H1 (cell line): ENCODE measurements at regions of chr5 and their contacts with region 1.

Region 1: GRCh38 chr5:173201636-173202276 is 33.2 kb downstream of the NKX2-5 start:
- DNase-seq: peak in 1 of 2 experiments; percentile 17
- H3K4me3 ChIP-seq: no peak overlapping the region
- H3K27ac ChIP-seq: no peak overlapping the region
- H3K4me1 ChIP-seq: peaks cover 0 to 5% (median 2%) of the 10 kb centered on the region in 4 experiments; a peak in 3 of 7 replicates
- H3K27me3 ChIP-seq: peaks cover 0 to 2% (median 0%) of the 10 kb centered on the region in 4 experiments; a peak in 1 of 7 replicates
- CTCF ChIP-seq: no peak
- EP300 ChIP-seq: no peak
- POLR2A ChIP-seq: no peak
- RAD21 ChIP-seq: no peak

Region 2: DNA sequence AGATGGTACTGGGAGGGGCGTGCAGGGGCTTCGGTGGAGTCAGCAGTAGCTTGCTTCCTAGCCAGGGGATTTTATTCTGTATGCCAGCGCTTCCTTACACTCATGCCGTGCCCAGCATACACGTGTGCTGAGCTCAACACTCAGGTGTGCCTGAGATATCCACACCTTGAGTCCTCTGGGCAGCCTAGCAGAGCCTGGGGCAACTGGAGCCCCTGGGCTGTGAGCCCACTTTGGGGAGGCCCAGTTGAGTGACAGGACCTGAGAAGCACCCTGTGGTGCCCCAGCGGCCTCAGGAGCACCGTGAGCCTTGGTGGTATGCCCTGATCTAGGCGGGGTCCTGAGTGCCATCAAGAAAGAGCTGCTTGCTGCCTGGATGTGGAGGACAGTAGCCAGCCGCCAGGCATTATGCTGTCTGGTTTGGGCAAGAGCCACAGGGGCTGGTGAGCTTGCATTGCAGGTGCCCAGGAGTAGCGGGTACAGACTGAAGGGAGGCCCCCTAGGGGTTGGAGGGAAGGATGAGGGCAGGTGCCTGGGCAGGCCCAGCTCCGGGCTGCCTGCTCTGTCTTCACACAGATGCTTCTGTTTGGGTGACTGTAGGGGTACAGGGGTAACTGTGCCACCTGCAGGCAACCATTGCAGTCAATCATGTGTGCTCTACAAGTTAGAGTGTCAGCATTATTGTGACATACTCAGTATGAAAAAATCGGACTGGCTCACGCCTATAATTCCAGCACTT is 14.5 kb before region 1 on chr5:
- CTCF ChIA-PET with region 1: interaction called, 15 read pairs
- POLR2A ChIA-PET with region 1: no interaction called
- DNase-seq: peak; percentile 19 to 59
- H3K4me3 ChIP-seq: no peak overlapping the region
- H3K27ac ChIP-seq: no peak overlapping the region
- H3K4me1 ChIP-seq: peaks cover 0 to 4% (median 0%) of the 10 kb centered on the region in 4 experiments; a peak in 1 of 7 replicates
- H3K27me3 ChIP-seq: no peaks in the 10 kb centered on the region
- CTCF ChIP-seq: peak; percentile 43 to 46 (median 43)
- EP300 ChIP-seq: no peak
- POLR2A ChIP-seq: no peak
- RAD21 ChIP-seq: peak; percentile 12 to 36; a peak in 2 of 4 replicates

Region 3: GRCh38 chr5:173287086-173287485 is 85.3 kb after region 1 on chr5:
- CTCF ChIA-PET with region 1: no interaction called
- POLR2A ChIA-PET with region 1: no interaction called
- DNase-seq: no peak
- H3K4me3 ChIP-seq: no peak overlapping the region
- H3K27ac ChIP-seq: no peak overlapping the region
- H3K4me1 ChIP-seq: peaks cover 2 to 10% (median 4%) of the 10 kb centered on the region in 4 experiments; a peak in 6 of 7 replicates
- H3K27me3 ChIP-seq: peaks cover 3 to 20% (median 18%) of the 10 kb centered on the region in 4 experiments
- CTCF ChIP-seq: no peak
- EP300 ChIP-seq: no peak
- POLR2A ChIP-seq: no peak
- RAD21 ChIP-seq: no peak

Region 4: DNA sequence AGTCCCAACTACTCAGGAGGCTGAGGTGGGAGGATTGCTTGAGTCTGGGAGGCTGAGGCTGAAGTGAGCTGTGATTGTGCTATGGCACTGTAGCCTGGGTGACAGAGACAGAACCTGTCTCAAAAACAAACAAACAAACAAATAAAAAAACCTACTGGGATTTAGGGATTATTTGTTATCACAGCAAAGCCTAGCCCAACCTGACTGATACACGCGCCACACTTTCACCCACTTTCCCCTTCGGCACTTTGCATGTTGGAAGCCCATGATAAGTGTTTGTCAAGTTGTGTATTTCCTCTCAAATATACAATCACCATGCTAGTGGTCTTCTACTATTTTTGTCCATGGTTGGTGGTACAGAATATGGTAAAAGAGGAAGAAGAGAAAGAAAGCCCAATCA is 177.0 kb after region 1 on chr5:
- CTCF ChIA-PET with region 1: no interaction called
- POLR2A ChIA-PET with region 1: no interaction called
- DNase-seq: no peak
- H3K4me3 ChIP-seq: no peak overlapping the region
- H3K27ac ChIP-seq: no peak overlapping the region
- H3K4me1 ChIP-seq: no peaks in the 10 kb centered on the region
- H3K27me3 ChIP-seq: no peaks in the 10 kb centered on the region
- CTCF ChIP-seq: no peak
- EP300 ChIP-seq: no peak
- POLR2A ChIP-seq: no peak
- RAD21 ChIP-seq: no peak